Aorta (tissue), 5 donors: ENCODE measurements at regions of chr13 and their contacts with region 1.

Region 1: GRCh38 chr13:74287724-74288169 is 153.5 kb upstream of the KLF12 start:
- DNase-seq: peak; percentile 90 to 94
- ATAC-seq: peak; percentile 76
- H3K4me3 ChIP-seq: peak overlapping the region in 1 of 2 donors; percentile 38
- H3K27ac ChIP-seq: no peak overlapping the region
- H3K4me1 ChIP-seq: peaks cover 0 to 3% of the 10 kb centered on the region in 2 donors
- H3K27me3 ChIP-seq: no peaks in the 10 kb centered on the region

Region 2: DNA sequence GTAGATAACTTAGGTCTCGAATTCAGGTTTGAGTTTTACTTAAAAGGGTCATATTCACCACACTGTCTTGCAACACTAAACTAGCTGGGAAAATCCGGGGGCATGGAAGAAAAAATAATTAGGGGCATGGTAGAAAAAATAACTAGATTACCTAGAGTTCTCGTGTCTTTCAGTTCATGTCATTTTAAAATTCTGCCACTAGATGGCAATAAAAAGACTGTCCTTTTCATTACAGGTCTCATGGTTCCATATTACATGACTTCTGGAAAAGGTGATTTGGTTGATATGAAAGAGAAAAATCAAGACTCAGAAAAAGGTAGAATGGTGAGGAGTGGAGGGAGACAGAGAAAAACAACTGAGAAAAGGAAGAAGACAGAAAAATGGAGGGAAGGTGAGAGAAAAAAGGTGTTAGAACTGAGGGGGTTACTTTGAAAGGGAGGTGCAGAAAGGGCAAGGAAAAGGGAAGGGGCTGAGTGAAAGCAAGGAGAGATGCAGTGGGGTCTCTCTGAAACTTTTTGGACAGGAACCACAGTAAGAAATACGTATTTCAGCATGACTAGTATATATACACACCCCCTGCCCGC is 452.5 kb before region 1 on chr13:
- intact Hi-C with region 1: loop called (anchors 5 kb)
- DNase-seq: no peak
- ATAC-seq: peak; percentile 62
- H3K4me3 ChIP-seq: no peak overlapping the region
- H3K27ac ChIP-seq: no peak overlapping the region
- H3K4me1 ChIP-seq: peaks cover 0 to 3% of the 10 kb centered on the region in 2 donors
- H3K27me3 ChIP-seq: no peaks in the 10 kb centered on the region

Region 3: DNA sequence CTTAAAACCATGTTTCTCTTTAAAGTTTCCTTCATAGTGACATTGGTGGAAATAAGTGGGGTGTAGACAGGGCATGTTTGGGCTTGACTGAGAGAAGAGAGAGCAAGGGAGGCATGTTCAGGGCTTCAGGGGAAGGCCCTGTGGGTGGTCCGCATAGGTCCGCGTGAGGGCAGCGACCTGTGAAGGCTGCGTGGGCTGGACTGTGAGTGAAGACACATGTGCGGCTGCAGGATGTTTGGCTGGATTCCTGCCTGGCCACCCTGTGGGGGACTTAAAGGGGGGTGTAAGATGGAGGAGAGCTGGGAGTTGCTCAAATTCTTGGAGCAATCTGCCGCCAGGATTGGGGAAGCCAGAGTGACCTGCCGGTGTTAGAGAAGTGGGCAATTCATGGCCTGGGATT is 129.7 kb before region 1 on chr13:
- intact Hi-C with region 1: no loop called
- DNase-seq: no peak
- ATAC-seq: no peak
- H3K4me3 ChIP-seq: no peak overlapping the region
- H3K27ac ChIP-seq: no peak overlapping the region
- H3K4me1 ChIP-seq: no peaks in the 10 kb centered on the region
- H3K27me3 ChIP-seq: no peaks in the 10 kb centered on the region

Region 4: DNA sequence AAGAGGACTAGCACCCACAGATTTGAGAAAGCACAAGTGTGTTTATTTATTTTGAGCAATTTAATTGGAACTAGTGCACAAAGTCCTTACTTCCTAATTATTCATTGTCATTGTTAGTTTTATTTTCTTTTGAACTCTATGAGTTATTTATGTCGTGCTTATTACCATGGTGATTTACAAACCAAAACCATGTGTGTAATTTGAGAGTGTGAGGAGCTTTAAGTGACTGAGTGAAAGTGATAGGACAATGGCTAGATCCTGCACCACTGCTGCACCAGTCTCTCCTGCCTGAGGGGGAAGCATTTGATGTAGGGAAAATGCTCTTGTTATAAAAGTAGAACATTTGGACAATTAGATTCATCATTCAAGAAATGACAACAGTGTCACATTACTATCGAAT is 18.7 kb after region 1 on chr13:
- intact Hi-C with region 1: no loop called
- DNase-seq: no peak
- ATAC-seq: no peak
- H3K4me3 ChIP-seq: no peak overlapping the region
- H3K27ac ChIP-seq: no peak overlapping the region
- H3K4me1 ChIP-seq: no peaks in the 10 kb centered on the region
- H3K27me3 ChIP-seq: no peaks in the 10 kb centered on the region